ENCODE measurements at regions of chr16 and their contacts with region 1.

Region 1: GRCh38 chr16:15643048-15643945 is at the start of gene MARF1:
- DNase-seq: peak; percentile 98 to 100 (median 100)
- ATAC-seq: peak; percentile 77
- H3K4me3 ChIP-seq: peak within 1 kb of the TSS; percentile 80
- H3K4me3 Mint-ChIP-seq: peak within 1 kb of the TSS; percentile 96
- H3K27ac ChIP-seq: peak within 1 kb of the TSS; percentile 96 to 99
- H3K27ac Mint-ChIP-seq: peak within 1 kb of the TSS; percentile 98
- H3K4me1 ChIP-seq: peaks cover 32% of the 10 kb centered on the region
- H3K4me1 Mint-ChIP-seq: peaks cover 49% of the 10 kb centered on the region
- H3K27me3 ChIP-seq: no peaks in the 10 kb centered on the region
- H3K27me3 Mint-ChIP-seq: no peaks in the 10 kb centered on the region
- CTCF ChIP-seq: peak; percentile 56
- total RNA-seq, gene MARF1: 156 to 157 TPM

Region 2: GRCh38 chr16:14632692-14633569 is 1010.4 kb before region 1 on chr16 and contains the start of gene BFAR:
- CTCF ChIA-PET with region 1: no interaction called
- POLR2A ChIA-PET with region 1: no interaction called
- intact Hi-C with region 1: loop called in 1 of 2 experiments (anchors 10 kb)
- DNase-seq: peak; percentile 98 to 100 (median 99)
- ATAC-seq: peak; percentile 70
- H3K4me3 ChIP-seq: peak within 1 kb of the TSS; percentile 98
- H3K4me3 Mint-ChIP-seq: peak within 1 kb of the TSS; percentile 100
- H3K27ac ChIP-seq: peak within 1 kb of the TSS; percentile 82 to 92
- H3K27ac Mint-ChIP-seq: peak within 1 kb of the TSS; percentile 93
- H3K4me1 ChIP-seq: peaks cover 65% of the 10 kb centered on the region
- H3K4me1 Mint-ChIP-seq: peaks cover 64% of the 10 kb centered on the region
- H3K27me3 ChIP-seq: no peaks in the 10 kb centered on the region
- H3K27me3 Mint-ChIP-seq: no peaks in the 10 kb centered on the region
- CTCF ChIP-seq: no peak
- total RNA-seq, gene BFAR: 36.9 to 37.6 TPM

Region 3: DNA sequence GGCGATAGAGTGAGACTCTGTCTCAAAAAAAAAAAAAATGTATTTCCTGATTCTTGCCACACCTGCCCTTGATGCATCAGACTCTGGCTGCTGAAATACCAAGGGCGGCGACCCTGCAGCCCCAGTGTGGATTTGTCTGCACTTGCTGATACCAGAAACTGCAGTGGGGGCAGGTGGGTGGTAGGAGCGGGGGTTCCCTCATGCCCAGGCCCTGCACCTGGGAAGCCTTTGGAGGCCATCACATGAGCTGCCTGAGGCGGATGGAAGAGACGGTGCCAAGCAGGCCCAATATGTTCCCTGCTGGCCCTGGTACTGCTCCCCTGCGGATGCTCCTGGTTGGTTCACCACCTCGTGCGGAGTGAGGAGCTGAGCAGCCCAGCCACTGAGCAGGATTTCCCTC is 51.0 kb before region 1 on chr16:
- CTCF ChIA-PET with region 1: interaction called, 15 read pairs
- POLR2A ChIA-PET with region 1: interaction called, 23 read pairs
- intact Hi-C with region 1: loop called (anchors 2 to 5 kb)
- DNase-seq: peak in 13 of 14 experiments; percentile 8 to 72 (median 38)
- ATAC-seq: no peak
- H3K4me3 ChIP-seq: no peak overlapping the region
- H3K4me3 Mint-ChIP-seq: no peak overlapping the region
- H3K27ac ChIP-seq: peak overlapping the region; percentile 21 to 34
- H3K27ac Mint-ChIP-seq: peak overlapping the region; percentile 61
- H3K4me1 ChIP-seq: peaks cover 36% of the 10 kb centered on the region
- H3K4me1 Mint-ChIP-seq: peaks cover 20% of the 10 kb centered on the region
- H3K27me3 ChIP-seq: no peaks in the 10 kb centered on the region
- H3K27me3 Mint-ChIP-seq: no peaks in the 10 kb centered on the region
- CTCF ChIP-seq: no peak

Region 4: GRCh38 chr16:15631730-15632409 is 11.4 kb before region 1 on chr16:
- CTCF ChIA-PET with region 1: interaction called, 17 read pairs
- POLR2A ChIA-PET with region 1: interaction called, 25 read pairs
- intact Hi-C with region 1: no loop called
- DNase-seq: no peak
- ATAC-seq: no peak
- H3K4me3 ChIP-seq: no peak overlapping the region
- H3K4me3 Mint-ChIP-seq: no peak overlapping the region
- H3K27ac ChIP-seq: no peak overlapping the region
- H3K27ac Mint-ChIP-seq: peak overlapping the region; percentile 9
- H3K4me1 ChIP-seq: peaks cover 14% of the 10 kb centered on the region
- H3K4me1 Mint-ChIP-seq: peaks cover 44% of the 10 kb centered on the region
- H3K27me3 ChIP-seq: no peaks in the 10 kb centered on the region
- H3K27me3 Mint-ChIP-seq: no peaks in the 10 kb centered on the region
- CTCF ChIP-seq: no peak

Region 5: DNA sequence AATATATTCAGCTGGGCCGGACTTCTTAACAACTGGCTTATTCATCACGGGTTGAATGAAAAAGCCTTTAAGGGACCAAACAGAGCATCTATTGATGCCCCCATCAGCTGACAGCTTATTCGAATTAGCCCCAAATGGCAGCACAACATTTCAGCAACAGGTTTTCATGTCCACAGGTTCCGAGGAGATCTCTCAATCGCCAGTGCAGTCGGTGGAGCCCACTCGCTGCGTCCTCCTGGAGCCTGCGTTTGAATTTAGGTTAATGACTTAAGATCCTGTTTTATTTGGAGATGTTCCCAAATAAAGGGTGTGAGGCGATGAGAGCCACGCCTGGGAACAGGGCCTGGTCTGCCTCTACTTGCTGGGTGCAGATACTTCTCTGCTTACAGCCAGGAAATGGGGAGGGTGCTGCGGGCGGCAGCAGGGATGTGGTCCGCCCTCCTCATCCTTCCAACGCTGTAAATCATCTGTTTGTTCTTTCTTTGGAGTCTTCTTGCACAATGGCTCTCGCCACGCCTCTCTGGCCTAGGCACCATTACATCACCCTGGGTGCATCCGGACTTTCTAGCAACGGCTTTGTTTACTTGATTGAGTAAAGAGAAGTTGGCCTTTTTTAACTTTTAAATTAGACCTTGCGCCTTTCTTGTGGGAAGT is 29.3 kb after region 1 on chr16:
- CTCF ChIA-PET with region 1: interaction called, 20 read pairs
- POLR2A ChIA-PET with region 1: interaction called, 48 read pairs
- intact Hi-C with region 1: loop called (anchors 1 to 2 kb)
- DNase-seq: peak; percentile 57 to 93 (median 78)
- ATAC-seq: peak; percentile 95
- H3K4me3 ChIP-seq: peak overlapping the region; percentile 26
- H3K4me3 Mint-ChIP-seq: peak overlapping the region; percentile 40
- H3K27ac ChIP-seq: peak overlapping the region; percentile 94 to 96
- H3K27ac Mint-ChIP-seq: peak overlapping the region; percentile 92
- H3K4me1 ChIP-seq: peaks cover 44% of the 10 kb centered on the region
- H3K4me1 Mint-ChIP-seq: peaks cover 39% of the 10 kb centered on the region
- H3K27me3 ChIP-seq: no peaks in the 10 kb centered on the region
- H3K27me3 Mint-ChIP-seq: no peaks in the 10 kb centered on the region
- CTCF ChIP-seq: no peak

Region 6: DNA sequence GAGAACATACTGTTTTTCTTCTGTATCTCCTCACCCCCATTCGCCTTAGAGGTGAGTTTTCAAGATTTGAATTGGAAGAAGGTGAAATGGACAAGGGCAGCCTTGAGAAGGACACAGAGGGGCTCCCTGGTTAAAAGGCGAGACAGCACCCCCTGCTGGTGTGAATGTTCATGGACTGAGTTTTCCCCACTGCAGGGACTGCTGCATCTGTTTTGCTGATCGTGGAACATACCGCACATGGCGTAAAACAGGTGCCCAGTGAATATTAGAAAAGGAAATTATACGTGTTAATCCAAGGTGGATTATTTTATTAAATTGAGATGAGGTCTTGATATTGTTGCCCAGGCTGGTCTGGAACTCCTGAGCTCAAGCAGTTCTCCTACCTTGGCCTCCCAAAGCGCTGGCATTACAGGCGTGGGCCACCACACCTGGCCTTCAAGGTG is 61.3 kb after region 1 on chr16:
- CTCF ChIA-PET with region 1: interaction called, 11 read pairs
- POLR2A ChIA-PET with region 1: interaction called, 7 read pairs
- intact Hi-C with region 1: loop called (anchors 2 kb)
- DNase-seq: peak; percentile 58 to 84 (median 70)
- ATAC-seq: peak; percentile 76
- H3K4me3 ChIP-seq: no peak overlapping the region
- H3K4me3 Mint-ChIP-seq: no peak overlapping the region
- H3K27ac ChIP-seq: no peak overlapping the region
- H3K27ac Mint-ChIP-seq: peak overlapping the region; percentile 72
- H3K4me1 ChIP-seq: peaks cover 7% of the 10 kb centered on the region
- H3K4me1 Mint-ChIP-seq: peaks cover 18% of the 10 kb centered on the region
- H3K27me3 ChIP-seq: no peaks in the 10 kb centered on the region
- H3K27me3 Mint-ChIP-seq: no peaks in the 10 kb centered on the region
- CTCF ChIP-seq: peak; percentile 88